ENCODE measurements at regions of chr12 and their contacts with region 1.

Region 1: DNA sequence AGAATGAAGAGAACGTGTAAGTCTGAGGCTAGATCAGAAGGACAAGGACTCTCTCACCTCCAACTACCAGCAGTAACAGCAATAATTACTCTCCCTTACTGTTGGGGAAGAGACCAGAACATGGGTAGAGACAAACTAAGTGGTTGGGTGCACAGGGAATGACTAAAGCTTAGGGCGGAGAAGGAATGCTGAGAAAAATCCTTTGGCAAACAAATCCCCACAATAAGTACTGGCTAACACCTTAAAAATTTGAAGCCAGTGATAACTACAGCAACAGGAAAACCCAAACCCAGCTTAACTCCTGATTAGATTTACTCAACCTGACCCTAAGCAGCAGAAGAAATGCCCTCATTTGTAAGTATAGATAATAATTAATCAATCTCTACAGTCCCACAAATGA is 759.0 kb downstream of the AACS start:
- DNase-seq: no peak
- ATAC-seq: no peak
- H3K4me3 ChIP-seq: no peak overlapping the region
- H3K4me3 Mint-ChIP-seq: no peak overlapping the region
- H3K27ac ChIP-seq: no peak overlapping the region
- H3K27ac Mint-ChIP-seq: no peak overlapping the region
- H3K4me1 ChIP-seq: no peaks in the 10 kb centered on the region
- H3K4me1 Mint-ChIP-seq: no peaks in the 10 kb centered on the region
- H3K27me3 ChIP-seq: no peaks in the 10 kb centered on the region
- H3K27me3 Mint-ChIP-seq: no peaks in the 10 kb centered on the region
- CTCF ChIP-seq: no peak

Region 2: DNA sequence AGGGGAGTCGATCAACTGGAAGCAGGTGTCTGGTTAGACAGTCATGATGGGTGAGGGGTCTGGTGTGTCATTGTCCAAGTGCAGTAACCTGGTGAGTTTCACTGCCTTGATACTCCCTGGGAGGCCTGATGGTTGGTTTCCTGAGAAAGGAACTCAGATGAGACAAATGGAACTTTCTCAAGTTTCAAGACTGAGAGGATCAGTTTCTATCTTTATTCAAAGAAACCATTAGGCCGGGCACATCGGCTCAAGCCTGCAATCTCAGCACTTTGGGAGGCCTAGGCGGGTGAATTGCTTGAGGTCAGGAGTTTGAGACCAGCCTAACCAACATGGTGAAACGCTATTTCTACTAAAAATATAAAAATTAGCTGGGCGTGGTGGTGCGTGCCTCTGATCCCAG is 17.1 kb after region 1 on chr12:
- CTCF ChIA-PET with region 1: no interaction called
- POLR2A ChIA-PET with region 1: no interaction called
- intact Hi-C with region 1: loop called in 1 of 2 experiments (anchors 2 kb)
- DNase-seq: no peak
- ATAC-seq: no peak
- H3K4me3 ChIP-seq: no peak overlapping the region
- H3K4me3 Mint-ChIP-seq: no peak overlapping the region
- H3K27ac ChIP-seq: no peak overlapping the region
- H3K27ac Mint-ChIP-seq: no peak overlapping the region
- H3K4me1 ChIP-seq: no peaks in the 10 kb centered on the region
- H3K4me1 Mint-ChIP-seq: no peaks in the 10 kb centered on the region
- H3K27me3 ChIP-seq: no peaks in the 10 kb centered on the region
- H3K27me3 Mint-ChIP-seq: no peaks in the 10 kb centered on the region
- CTCF ChIP-seq: no peak

Region 3: DNA sequence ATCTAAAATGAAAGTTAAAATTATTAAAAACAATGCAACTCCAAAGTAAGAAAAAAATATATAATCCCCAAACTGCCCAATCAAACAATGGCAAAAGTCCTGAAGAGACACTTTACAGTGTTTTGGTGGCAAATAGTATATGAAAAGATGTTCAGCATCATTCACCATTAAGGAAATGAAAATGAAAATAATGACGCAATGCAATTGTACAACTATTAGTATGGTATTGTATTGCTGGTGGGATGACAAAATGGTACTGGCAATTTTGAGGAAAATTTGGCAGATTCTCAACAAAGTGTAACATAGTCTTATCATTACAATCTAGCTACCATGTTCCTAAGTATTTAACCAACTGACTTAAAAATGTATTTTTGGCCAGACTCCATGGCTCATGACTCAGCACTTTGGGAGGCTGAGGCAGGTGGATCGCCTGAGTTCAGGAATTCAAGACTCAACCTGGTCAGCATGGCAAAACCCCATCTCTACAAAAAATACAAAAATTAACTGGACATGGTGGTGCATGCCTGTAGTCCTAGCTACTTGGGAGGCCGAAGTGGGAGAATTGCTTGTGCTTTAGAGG is 650.3 kb after region 1 on chr12:
- CTCF ChIA-PET with region 1: no interaction called
- POLR2A ChIA-PET with region 1: no interaction called
- intact Hi-C with region 1: loop called in 1 of 2 experiments (anchors 10 kb)
- DNase-seq: no peak
- ATAC-seq: no peak
- H3K4me3 ChIP-seq: no peak overlapping the region
- H3K4me3 Mint-ChIP-seq: no peak overlapping the region
- H3K27ac ChIP-seq: no peak overlapping the region
- H3K27ac Mint-ChIP-seq: no peak overlapping the region
- H3K4me1 ChIP-seq: no peaks in the 10 kb centered on the region
- H3K4me1 Mint-ChIP-seq: no peaks in the 10 kb centered on the region
- H3K27me3 ChIP-seq: no peaks in the 10 kb centered on the region
- H3K27me3 Mint-ChIP-seq: no peaks in the 10 kb centered on the region
- CTCF ChIP-seq: no peak